Heart right ventricle (tissue), 16 donors: ENCODE measurements at regions of chr9 and their contacts with region 1.

Region 1: DNA sequence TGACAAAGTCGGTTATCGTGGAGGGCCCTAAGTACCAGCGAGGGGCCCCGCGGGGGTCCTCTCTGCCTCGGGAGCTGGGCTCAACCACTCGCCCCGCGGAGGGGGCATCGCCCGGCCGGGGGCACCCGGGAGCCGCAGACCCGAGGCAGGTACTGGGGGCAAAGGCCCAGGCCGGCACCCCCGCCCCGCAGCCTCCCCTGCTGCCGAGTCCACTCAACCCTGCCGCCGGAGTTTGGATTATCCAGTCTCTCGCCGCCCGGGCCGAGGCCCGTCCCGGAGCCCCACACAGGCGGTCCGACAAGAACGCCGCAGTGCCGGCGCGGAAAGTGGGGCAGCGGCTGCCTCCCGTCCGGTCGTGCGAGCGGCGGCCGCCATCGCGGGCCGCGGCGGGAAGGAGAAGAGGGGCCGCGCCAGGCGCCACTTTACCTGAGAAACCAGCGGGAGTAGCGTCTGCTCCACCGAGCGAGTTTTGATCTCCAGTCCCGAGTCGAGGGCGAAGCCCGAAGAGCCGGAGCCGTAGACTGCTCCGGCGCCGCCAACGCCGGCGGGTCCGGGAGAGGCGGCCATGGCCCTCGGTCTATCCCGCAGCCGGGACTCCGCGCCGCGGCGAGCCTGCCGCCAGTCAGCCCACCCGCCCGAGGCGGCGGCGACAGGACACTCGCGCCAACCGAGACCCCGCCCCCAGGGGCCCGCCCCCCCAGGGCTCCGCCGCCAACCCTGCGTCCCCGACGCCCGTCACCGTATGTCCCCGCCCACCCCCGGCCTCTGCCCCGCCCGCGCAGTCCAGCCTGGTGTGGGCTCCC is at the start of gene CTNNAL1:
- DNase-seq: peak; percentile 95 to 98
- ATAC-seq: peak; percentile 97 to 98 (median 97)
- H3K4me3 ChIP-seq: peak within 1 kb of the TSS; percentile 55 to 93 (median 86)
- H3K27ac ChIP-seq: peak within 1 kb of the TSS; percentile 41 to 97 (median 94)
- H3K4me1 ChIP-seq: peaks cover 4 to 64% (median 44%) of the 10 kb centered on the region in 9 donors
- H3K27me3 ChIP-seq: no peaks in the 10 kb centered on the region
- CTCF ChIP-seq: no peak
- total RNA-seq, gene CTNNAL1: 48.5 to 75.4 (median 63.2) TPM

Region 2: GRCh38 chr9:108933718-108934322 is 79.3 kb before region 1 on chr9 and contains the start of gene ELP1:
- intact Hi-C with region 1: loop called in 2 of 10 experiments (anchors 5 kb)
- DNase-seq: peak; percentile 94
- ATAC-seq: peak; percentile 92 to 97 (median 95)
- H3K4me3 ChIP-seq: peak within 1 kb of the TSS; percentile 71 to 100 (median 86)
- H3K27ac ChIP-seq: peak within 1 kb of the TSS; percentile 83 to 94 (median 92)
- H3K4me1 ChIP-seq: peaks cover 5 to 33% (median 26%) of the 10 kb centered on the region in 9 donors
- H3K27me3 ChIP-seq: no peaks in the 10 kb centered on the region
- CTCF ChIP-seq: peak in 4 of 9 donors; percentile 32 to 55 (median 42)
- total RNA-seq, gene ELP1: 19.2 to 31.7 (median 25.7) TPM

Region 3: GRCh38 chr9:108963459-108964143 is 49.5 kb before region 1 on chr9:
- intact Hi-C with region 1: loop called in 2 of 10 experiments (anchors 5 to 10 kb)
- DNase-seq: peak in 1 of 2 donors; percentile 23
- ATAC-seq: peak in 7 of 8 donors; percentile 44 to 78 (median 68)
- H3K4me3 ChIP-seq: no peak overlapping the region
- H3K27ac ChIP-seq: peak overlapping the region in 8 of 10 donors; percentile 16 to 69 (median 46)
- H3K4me1 ChIP-seq: peaks cover 0 to 54% (median 22%) of the 10 kb centered on the region in 9 donors
- H3K27me3 ChIP-seq: no peaks in the 10 kb centered on the region
- CTCF ChIP-seq: no peak

Region 4: GRCh38 chr9:108972626-108973209 is 40.4 kb before region 1 on chr9:
- intact Hi-C with region 1: loop called in 3 of 10 experiments (anchors 5 to 10 kb)
- DNase-seq: no peak
- ATAC-seq: peak; percentile 44 to 77 (median 56)
- H3K4me3 ChIP-seq: no peak overlapping the region
- H3K27ac ChIP-seq: peak overlapping the region; percentile 21 to 79 (median 69)
- H3K4me1 ChIP-seq: peaks cover 3 to 46% (median 29%) of the 10 kb centered on the region in 9 donors
- H3K27me3 ChIP-seq: no peaks in the 10 kb centered on the region
- CTCF ChIP-seq: no peak

Region 5: GRCh38 chr9:109119439-109120203 is 106.5 kb after region 1 on chr9 and contains the start of gene TMEM245:
- intact Hi-C with region 1: loop called in 2 of 10 experiments (anchors 10 kb)
- DNase-seq: peak; percentile 94 to 99
- ATAC-seq: peak; percentile 95 to 99 (median 98)
- H3K4me3 ChIP-seq: peak within 1 kb of the TSS; percentile 68 to 99 (median 92)
- H3K27ac ChIP-seq: peak within 1 kb of the TSS; percentile 44 to 99 (median 94)
- H3K4me1 ChIP-seq: peaks cover under 1 to 51% (median 38%) of the 10 kb centered on the region in 9 donors
- H3K27me3 ChIP-seq: no peaks in the 10 kb centered on the region
- CTCF ChIP-seq: peak in 3 of 9 donors; percentile 3 to 23 (median 22)
- total RNA-seq, gene TMEM245: 84.2 to 152 (median 99.9) TPM